Activated naive CD4-positive, alpha-beta T cell treated with anti-CD3 and anti-CD28 coated beads for 36 hours (primary cell): ENCODE measurements at regions of chr2 and their contacts with region 1.

Region 1: DNA sequence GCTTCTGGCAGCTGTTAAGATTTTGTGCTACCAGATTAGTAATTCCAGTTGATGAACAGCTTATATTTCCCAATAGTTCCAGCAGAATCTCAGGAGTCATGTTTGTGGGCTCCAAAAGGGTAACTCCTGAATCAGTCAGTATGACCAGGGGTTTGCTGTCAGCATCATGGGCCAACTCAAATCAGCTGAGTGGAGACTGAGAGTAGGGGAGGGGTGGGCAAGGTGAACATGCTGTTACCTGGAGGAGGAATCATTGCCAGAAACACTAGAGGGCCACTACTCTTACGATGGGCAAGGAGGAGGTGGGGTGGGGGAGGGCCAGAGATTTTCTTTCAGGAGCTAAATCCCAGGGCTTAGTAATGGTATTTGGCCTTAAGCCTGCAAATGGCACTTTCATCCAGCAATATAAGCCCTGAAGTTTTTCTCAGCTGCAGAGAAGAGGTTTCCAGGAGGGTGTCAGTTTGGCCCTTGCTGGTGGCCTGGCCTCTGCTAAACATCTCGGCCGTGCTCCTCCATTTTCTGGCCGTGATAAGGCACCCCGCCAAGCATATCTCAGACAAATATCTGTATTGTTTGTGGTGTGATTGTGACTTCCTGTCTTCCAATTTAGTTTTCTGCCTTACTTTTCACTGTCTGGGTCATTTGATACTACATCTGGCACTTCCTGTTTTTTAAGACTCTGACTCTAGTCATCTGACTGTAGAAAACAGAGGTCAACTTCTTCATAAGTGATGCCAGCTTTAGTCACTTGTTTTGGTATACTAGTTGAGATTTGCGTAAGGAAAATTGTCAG is 120.5 kb upstream of the CXCR4 start:
- DNase-seq: peak; percentile 49
- H3K4me3 Mint-ChIP-seq: peak overlapping the region; percentile 10
- H3K27ac Mint-ChIP-seq: peak overlapping the region; percentile 77
- H3K4me1 Mint-ChIP-seq: peaks cover 39% of the 10 kb centered on the region
- H3K27me3 Mint-ChIP-seq: no peaks in the 10 kb centered on the region

Region 2: DNA sequence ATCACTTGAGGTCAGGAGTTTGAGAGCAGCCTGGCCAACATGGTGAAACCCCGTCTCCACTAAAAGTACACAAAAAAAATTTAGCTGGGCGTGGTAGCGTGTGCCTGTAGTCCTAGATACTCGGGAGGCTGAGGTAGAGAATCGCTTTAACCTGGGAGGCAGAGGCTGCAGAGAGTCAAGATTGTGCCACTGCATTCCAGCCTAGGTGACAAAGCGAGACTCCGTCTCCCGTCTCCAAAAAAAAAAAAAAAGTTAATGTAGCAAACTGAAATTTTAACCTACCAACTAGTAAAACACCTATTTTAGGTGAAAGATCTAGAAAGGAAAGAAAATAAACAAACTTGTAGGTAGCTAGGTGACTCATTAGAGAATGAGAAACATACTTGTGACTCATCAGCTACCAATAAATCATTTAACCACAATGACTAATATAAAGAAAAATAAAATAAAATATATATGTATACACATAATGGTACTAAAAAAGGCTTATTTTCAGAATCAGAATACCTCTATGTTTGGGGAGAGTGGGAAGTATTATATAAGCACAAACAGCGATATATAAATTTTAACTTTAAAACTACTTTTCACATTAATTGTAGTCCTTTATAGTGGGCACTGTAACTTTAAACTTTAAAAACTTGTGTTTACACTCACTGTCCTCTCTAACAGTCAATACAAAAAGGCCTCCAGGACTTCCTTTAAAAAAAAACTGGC is 289.7 kb before region 1 on chr2:
- CTCF ChIA-PET with region 1: no interaction called
- intact Hi-C with region 1: loop called (anchors 2 kb)
- DNase-seq: peak; percentile 35
- H3K4me3 Mint-ChIP-seq: no peak overlapping the region
- H3K27ac Mint-ChIP-seq: peak overlapping the region; percentile 74
- H3K4me1 Mint-ChIP-seq: peaks cover 45% of the 10 kb centered on the region
- H3K27me3 Mint-ChIP-seq: no peaks in the 10 kb centered on the region

Region 3: DNA sequence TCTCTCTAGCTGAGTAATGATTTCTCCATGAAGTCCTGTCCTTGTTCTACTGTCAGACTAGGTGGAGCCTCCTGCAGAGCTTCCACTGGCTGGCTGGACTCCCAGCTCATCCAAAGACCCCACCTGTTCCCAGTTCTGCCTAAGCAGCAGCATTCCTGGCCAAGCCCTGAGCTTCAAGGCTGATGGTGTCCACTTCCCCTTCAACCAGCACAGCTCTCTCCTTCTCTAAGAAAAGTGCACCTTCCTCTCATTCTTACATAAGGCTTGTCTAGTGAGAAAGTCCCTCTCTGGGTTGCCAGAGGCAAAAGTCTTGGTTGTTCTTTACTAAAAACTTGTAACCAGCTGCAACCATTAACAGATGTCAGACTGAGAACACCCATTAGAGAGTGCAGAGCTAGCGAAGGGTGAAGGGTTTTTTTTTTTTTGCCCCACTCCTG is 179.4 kb before region 1 on chr2:
- CTCF ChIA-PET with region 1: interaction called, 5 read pairs
- intact Hi-C with region 1: loop called (anchors 1 kb)
- DNase-seq: no peak
- H3K4me3 Mint-ChIP-seq: no peak overlapping the region
- H3K27ac Mint-ChIP-seq: no peak overlapping the region
- H3K4me1 Mint-ChIP-seq: peaks cover 59% of the 10 kb centered on the region
- H3K27me3 Mint-ChIP-seq: no peaks in the 10 kb centered on the region

Region 4: DNA sequence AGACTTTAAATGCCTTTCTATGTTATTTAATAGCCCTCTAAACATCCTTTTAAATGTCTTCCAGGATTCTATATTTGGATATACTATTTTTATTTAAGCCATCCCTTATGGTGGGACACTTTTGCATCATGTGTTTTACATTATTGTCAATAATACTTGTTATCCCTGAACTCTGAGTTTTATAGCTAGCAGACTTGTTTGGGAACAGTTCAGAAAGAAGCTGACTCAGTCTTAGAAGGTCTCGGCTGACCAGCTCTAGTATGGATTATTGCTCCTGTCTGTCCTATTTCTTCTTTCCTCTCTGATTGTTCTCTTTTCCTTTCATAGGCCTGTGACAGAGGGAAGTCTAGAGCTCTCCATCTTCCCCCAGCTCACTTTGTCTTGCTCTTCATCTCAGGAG is 43.3 kb before region 1 on chr2:
- CTCF ChIA-PET with region 1: no interaction called
- intact Hi-C with region 1: no loop called
- DNase-seq: no peak
- H3K4me3 Mint-ChIP-seq: no peak overlapping the region
- H3K27ac Mint-ChIP-seq: no peak overlapping the region
- H3K4me1 Mint-ChIP-seq: no peaks in the 10 kb centered on the region
- H3K27me3 Mint-ChIP-seq: no peaks in the 10 kb centered on the region

Region 5: DNA sequence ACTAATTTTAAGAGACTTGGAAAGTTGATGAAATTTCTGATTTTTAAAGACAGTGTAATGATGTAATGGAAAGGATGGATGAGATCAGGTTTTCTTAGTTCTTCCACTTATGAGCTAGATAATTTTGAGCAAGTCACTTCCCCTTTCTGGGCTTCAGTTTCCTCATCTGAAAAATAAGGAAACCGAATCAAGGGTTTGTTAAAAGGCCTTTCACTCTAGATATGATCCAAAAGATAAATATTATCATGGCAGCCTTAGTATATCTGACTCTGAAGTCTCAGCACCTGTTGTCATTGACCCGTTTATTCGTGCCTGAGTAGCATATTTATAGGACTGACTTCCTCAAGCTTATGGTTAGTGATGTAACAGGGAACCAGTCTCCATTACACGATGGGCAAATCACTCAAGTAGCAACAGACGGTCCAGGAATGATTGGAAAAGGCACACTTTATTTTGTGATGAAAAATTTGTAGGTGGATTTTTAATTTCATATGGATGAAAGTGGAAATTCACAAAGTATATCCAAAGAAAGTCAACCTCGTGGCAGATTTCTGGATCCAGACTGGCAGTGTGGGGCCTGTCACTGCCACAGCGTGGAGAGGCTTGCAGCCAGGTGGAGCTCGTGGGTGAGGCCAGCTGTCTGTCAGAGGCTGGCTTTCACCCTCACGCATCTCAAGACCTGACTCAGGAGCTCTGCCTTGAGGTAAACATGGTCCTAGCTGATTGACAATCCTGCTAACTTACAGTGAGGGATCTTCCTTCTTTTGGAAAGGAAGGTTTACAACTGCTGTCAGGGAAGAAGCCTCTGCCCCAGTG is 17.4 kb after region 1 on chr2:
- CTCF ChIA-PET with region 1: interaction called, 6 read pairs
- intact Hi-C with region 1: loop called (anchors 1 kb)
- DNase-seq: peak; percentile 66
- H3K4me3 Mint-ChIP-seq: no peak overlapping the region
- H3K27ac Mint-ChIP-seq: no peak overlapping the region
- H3K4me1 Mint-ChIP-seq: peaks cover 30% of the 10 kb centered on the region
- H3K27me3 Mint-ChIP-seq: peaks cover 2% of the 10 kb centered on the region

Region 6: GRCh38 chr2:136310797-136311603 is 72.5 kb after region 1 on chr2:
- CTCF ChIA-PET with region 1: no interaction called
- intact Hi-C with region 1: loop called (anchors 1 kb)
- DNase-seq: peak; percentile 60
- H3K4me3 Mint-ChIP-seq: no peak overlapping the region
- H3K27ac Mint-ChIP-seq: peak overlapping the region; percentile 82
- H3K4me1 Mint-ChIP-seq: peaks cover 18% of the 10 kb centered on the region
- H3K27me3 Mint-ChIP-seq: no peaks in the 10 kb centered on the region

Region 7: GRCh38 chr2:136378712-136379595 is 140.5 kb after region 1 on chr2:
- CTCF ChIA-PET with region 1: interaction called, 6 read pairs
- intact Hi-C with region 1: loop called (anchors 1 kb)
- DNase-seq: peak; percentile 90
- H3K4me3 Mint-ChIP-seq: no peak overlapping the region
- H3K27ac Mint-ChIP-seq: no peak overlapping the region
- H3K4me1 Mint-ChIP-seq: peaks cover 79% of the 10 kb centered on the region
- H3K27me3 Mint-ChIP-seq: no peaks in the 10 kb centered on the region

Region 8: GRCh38 chr2:136929531-136929930 is 691.0 kb after region 1 on chr2:
- CTCF ChIA-PET with region 1: no interaction called
- intact Hi-C with region 1: no loop called
- DNase-seq: no peak
- H3K4me3 Mint-ChIP-seq: no peak overlapping the region
- H3K27ac Mint-ChIP-seq: no peak overlapping the region
- H3K4me1 Mint-ChIP-seq: no peaks in the 10 kb centered on the region
- H3K27me3 Mint-ChIP-seq: peaks cover 7% of the 10 kb centered on the region